ENCODE measurements at regions of chr14 and their contacts with region 1.

Region 1: GRCh38 chr14:30980980-30981379 is 44.5 kb upstream of the AP4S1 start:
- DNase-seq: no peak
- H3K4me3 ChIP-seq: no peak overlapping the region
- H3K27ac ChIP-seq: no peak overlapping the region
- H3K4me1 ChIP-seq: no peaks in the 10 kb centered on the region
- H3K27me3 ChIP-seq: no peaks in the 10 kb centered on the region
- CTCF ChIP-seq: no peak

Region 2: DNA sequence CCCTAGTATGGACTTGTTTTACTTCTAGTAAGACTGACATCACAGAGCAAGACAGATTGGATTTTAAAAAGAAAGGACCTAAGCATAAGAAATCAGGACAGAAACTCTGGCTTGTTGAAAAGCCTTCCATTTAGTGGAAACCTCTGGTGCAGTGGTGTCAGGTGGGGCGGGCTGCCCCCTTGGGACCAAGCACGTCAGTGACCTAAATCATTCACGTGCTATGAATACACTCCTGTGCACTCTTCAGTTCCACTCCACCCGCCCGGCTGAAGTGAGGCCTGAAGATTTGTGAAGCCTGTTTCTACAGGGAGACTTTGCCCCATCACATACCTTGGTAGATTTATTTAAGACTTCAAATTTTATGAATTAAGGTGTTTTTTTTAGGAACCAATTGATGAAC is 103.4 kb after region 1 on chr14:
- CTCF ChIA-PET with region 1: no interaction called
- POLR2A ChIA-PET with region 1: no interaction called
- intact Hi-C with region 1: loop called (anchors 2 kb)
- DNase-seq: no peak
- H3K4me3 ChIP-seq: no peak overlapping the region
- H3K27ac ChIP-seq: no peak overlapping the region
- H3K4me1 ChIP-seq: 0 out of 2 replicates have a peak, but pooled peaks cover 7% of the 10 kb centered on the region
- H3K27me3 ChIP-seq: no peaks in the 10 kb centered on the region
- CTCF ChIP-seq: no peak

Region 3: DNA sequence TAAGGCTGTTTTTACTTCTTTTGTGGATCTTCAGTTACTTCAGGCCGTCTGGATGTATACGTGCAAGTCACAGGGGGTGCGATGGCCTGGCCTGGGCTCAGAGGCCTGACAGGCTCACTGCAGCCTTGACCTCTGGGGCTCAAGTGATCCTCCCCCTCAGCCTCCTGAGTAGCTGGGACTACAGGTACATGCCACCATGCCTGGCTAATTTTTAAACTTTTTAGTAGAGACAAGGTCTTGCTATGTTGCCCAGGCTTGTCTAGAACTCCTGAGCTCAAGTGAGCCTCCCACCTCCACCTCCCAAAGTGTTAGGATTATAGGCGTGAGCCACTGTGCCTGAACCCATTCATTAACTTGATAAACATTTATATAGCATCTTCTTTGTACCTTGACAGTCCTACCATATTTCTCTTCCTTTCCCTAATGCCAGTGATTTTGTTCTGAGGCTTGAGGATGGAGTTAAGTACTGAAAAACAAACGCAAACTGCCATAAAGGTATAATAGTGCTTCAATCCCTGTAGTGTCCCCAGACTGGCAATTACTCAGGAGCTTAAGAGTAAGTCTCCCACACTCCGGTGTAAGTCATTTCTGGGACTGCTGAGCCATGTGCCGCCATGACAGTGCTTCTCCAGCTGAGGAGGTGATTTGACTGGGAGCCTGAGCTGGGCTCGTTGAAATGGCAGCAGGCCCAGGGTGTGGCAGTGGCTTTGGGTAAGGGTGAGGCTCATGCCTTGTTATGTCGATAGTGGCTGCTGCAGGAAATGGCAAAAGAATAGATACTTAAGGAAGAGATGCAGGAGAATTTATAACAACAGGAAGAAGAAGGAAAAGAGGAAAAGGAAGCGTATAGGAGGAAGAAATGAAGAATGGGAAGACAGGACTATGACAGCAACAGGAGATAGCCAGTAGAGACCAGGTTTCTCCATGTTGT is 270.3 kb after region 1 on chr14:
- CTCF ChIA-PET with region 1: no interaction called
- POLR2A ChIA-PET with region 1: no interaction called
- intact Hi-C with region 1: no loop called
- DNase-seq: no peak
- H3K4me3 ChIP-seq: no peak overlapping the region
- H3K27ac ChIP-seq: no peak overlapping the region
- H3K4me1 ChIP-seq: no peaks in the 10 kb centered on the region
- H3K27me3 ChIP-seq: no peaks in the 10 kb centered on the region
- CTCF ChIP-seq: no peak

Measured in PC-9 (cell line).